Aorta (tissue), 5 donors: ENCODE measurements at regions of chr10 and their contacts with region 1.

Region 1: DNA sequence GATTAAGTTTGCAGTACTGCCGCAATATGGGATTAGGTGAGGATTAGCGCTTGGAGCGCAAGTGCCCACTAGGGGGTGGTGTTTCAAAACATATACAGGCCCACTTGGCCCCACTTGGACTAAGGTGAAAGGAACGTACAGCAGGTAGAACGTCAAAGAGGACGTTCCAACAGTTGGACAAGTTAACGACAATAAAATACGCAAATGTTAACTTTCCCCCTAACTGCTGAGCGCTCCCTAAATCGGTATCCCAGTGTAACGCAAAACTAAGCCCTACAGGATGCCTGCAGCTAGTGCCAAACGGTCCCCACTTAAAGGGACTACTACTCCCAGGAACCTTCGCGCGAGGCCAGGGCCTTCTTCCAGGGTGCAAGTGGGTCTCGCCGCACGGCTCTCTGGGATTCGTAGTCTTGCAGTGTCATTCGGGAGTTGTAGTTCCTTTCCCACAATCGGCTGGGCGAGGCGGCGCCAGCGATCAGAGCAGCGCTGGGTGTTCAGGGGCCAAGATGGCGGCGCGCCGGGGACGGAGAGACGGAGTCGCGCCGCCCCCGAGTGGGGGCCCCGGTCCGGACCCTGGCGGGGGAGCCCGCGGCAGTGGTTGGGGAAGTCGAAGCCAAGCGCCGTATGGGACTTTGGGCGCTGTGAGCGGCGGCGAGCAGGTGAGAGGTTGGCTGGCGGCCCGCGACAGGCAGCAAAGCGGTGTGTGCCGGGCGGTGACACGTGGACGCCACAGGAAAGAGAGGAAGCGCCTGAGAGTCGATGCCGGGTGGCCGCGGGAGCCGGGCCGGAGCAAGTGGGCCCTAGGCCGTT is at the start of gene PPRC1:
- DNase-seq: peak; percentile 99 to 100
- ATAC-seq: peak; percentile 97
- H3K4me3 ChIP-seq: peak within 1 kb of the TSS; percentile 43 to 88
- H3K27ac ChIP-seq: peak within 1 kb of the TSS in 1 of 2 donors; percentile 53
- H3K4me1 ChIP-seq: no peaks in the 10 kb centered on the region
- H3K27me3 ChIP-seq: no peaks in the 10 kb centered on the region
- total RNA-seq, gene PPRC1: 31.4 to 35.9 TPM

Region 2: DNA sequence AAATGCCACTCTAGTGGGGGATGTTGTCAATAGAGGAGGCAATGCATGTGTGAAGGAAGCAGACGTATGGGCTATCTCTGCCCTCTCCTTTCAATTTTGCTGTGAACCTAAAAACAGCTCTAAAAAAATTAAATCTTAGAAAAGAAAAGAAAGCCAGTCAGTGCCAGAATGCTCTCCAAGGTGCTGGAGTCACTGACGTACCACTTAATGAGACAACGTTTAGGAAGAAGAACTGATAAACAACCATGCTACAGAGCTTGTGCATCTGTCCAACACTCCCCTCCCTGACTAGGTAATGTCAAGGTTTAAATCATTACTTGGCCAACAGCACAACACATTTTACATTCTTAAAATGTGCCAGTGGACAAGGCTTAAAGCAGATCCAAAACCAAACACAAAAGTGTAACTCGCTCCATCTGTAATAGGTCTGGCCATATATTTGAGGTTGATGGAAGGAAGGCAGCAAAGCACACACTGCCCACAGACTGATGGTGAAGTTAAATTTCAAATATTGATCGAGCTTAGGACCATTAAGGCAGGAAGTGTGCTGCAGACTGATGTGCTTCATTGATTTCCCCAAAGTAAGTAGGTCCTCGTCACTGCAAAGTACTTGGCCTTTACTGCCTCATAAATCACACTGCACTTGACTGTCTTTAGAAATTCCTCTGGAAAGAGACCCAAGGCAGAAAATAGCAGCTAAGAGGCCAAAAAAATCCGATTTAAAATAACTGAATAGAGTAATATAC is 92.3 kb before region 1 on chr10:
- intact Hi-C with region 1: no loop called
- DNase-seq: no peak
- ATAC-seq: no peak
- H3K4me3 ChIP-seq: no peak overlapping the region
- H3K27ac ChIP-seq: no peak overlapping the region
- H3K4me1 ChIP-seq: no peaks in the 10 kb centered on the region
- H3K27me3 ChIP-seq: no peaks in the 10 kb centered on the region

Region 3: GRCh38 chr10:102064868-102065560 is 67.8 kb before region 1 on chr10 and contains the start of gene HPS6:
- intact Hi-C with region 1: no loop called
- DNase-seq: peak; percentile 95 to 97
- ATAC-seq: peak; percentile 96
- H3K4me3 ChIP-seq: peak within 1 kb of the TSS; percentile 67 to 68
- H3K27ac ChIP-seq: peak within 1 kb of the TSS; percentile 19 to 42
- H3K4me1 ChIP-seq: peaks cover 0 to 3% of the 10 kb centered on the region in 2 donors
- H3K27me3 ChIP-seq: no peaks in the 10 kb centered on the region
- total RNA-seq, gene HPS6: 14.4 to 15.0 TPM

Region 4: GRCh38 chr10:102120991-102121753 is 11.6 kb before region 1 on chr10:
- intact Hi-C with region 1: loop called in 1 of 2 experiments (anchors 1 kb)
- DNase-seq: peak; percentile 80 to 81
- ATAC-seq: peak; percentile 56
- H3K4me3 ChIP-seq: peak overlapping the region; percentile 16 to 85
- H3K27ac ChIP-seq: peak overlapping the region; percentile 93 to 95
- H3K4me1 ChIP-seq: no peaks in the 10 kb centered on the region
- H3K27me3 ChIP-seq: no peaks in the 10 kb centered on the region

Region 5: DNA sequence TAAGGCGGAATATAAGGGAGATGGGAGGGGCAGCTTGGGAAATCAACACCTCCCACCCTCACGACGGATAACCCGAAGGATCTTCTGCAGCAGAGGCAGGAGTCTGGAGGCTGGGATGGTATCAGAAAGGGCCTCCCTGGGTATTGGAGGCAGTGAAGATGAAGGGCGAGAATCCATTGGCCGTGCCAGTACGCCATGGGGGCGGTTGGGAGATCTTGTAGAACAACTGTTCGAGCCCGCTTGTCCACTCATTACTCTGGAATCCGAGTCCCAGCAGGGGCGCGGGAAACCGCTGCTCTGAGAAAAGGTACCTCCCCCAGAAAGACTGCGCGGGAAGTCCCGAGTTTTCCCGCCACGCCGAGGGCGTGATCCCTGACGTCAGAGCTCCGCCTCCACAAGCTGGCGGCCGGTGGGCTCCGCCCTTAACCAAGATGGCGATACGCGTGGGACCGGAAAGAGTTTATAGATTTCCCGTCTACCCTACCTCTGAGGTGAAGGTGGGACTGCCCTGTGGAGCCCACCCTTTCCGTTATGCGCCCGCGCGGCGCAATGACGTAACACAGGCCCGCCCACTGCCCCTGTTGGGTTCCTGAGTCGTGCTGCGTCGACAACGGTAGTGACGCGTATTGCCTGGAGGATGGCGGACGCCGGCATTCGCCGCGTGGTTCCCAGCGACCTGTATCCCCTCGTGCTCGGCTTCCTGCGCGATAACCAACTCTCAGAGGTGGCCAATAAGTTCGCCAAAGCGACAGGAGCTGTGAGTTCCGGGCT is 19.2 kb after region 1 on chr10 and contains the start of gene NOLC1:
- intact Hi-C with region 1: loop called in 1 of 2 experiments (anchors 1 kb)
- DNase-seq: peak; percentile 99 to 100
- ATAC-seq: peak; percentile 99
- H3K4me3 ChIP-seq: peak within 1 kb of the TSS; percentile 62 to 76
- H3K27ac ChIP-seq: peak within 1 kb of the TSS in 1 of 2 donors; percentile 98
- H3K4me1 ChIP-seq: no peaks in the 10 kb centered on the region
- H3K27me3 ChIP-seq: no peaks in the 10 kb centered on the region
- total RNA-seq, gene NOLC1: 35.3 to 35.9 TPM

Region 6: DNA sequence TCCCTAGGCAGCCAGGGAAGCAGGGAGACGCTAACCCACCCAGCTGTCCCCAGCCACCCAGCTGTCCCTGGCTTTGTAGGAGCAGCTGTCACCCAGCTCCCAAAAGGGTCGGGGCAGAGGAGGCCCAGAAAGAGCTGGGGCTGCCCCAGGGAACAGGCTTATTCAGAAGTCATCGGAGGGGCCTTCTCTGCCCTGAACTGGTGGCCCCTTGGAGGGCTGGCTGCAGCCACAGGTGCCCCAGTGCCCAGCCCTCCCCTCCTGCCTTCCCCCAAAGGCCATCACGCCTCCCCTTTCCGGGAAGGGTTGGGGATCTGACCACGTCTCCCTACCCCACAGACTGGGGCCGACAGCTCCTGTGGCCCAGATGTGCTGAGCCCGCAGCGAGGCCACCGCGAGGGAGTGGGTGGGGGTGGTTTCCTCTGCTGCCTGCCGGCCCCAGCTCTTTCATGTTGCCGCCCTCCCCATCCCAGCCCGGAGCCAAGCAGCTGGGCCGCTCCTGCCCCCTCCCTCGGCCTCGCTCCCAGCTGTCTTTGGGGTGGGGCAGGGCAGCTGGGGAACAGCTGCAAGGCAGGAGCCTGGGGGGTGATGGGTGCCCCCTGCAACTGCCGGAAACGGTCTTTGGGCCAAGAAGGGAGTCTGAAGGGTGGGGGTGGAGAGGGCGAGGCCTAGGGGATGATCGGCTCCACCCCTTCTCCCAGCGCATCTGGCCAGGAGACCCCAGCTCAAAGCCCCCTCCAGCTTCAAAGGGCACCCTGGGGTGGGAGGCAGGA is 528.3 kb after region 1 on chr10:
- intact Hi-C with region 1: no loop called
- DNase-seq: peak; percentile 75 to 85
- ATAC-seq: peak; percentile 25
- H3K4me3 ChIP-seq: no peak overlapping the region
- H3K27ac ChIP-seq: no peak overlapping the region
- H3K4me1 ChIP-seq: no peaks in the 10 kb centered on the region
- H3K27me3 ChIP-seq: no peaks in the 10 kb centered on the region